ENCODE measurements at regions of chr4 and their contacts with region 1.

Region 1: GRCh38 chr4:78864405-78865024 is 74.7 kb downstream of the PAQR3 start:
- DNase-seq: no peak
- ATAC-seq: peak; percentile 47
- H3K4me3 Mint-ChIP-seq: peak overlapping the region; percentile 21
- H3K27ac Mint-ChIP-seq: peak overlapping the region; percentile 70
- H3K4me1 Mint-ChIP-seq: peaks cover 18% of the 10 kb centered on the region
- H3K27me3 Mint-ChIP-seq: no peaks in the 10 kb centered on the region
- CTCF ChIP-seq: peak; percentile 25

Region 2: GRCh38 chr4:78056265-78057129 is 808.0 kb before region 1 on chr4:
- CTCF ChIA-PET with region 1: no interaction called
- POLR2A ChIA-PET with region 1: no interaction called
- intact Hi-C with region 1: loop called (anchors 2 kb)
- DNase-seq: peak; percentile 29
- ATAC-seq: peak; percentile 74
- H3K4me3 Mint-ChIP-seq: peak overlapping the region; percentile 93
- H3K27ac Mint-ChIP-seq: no peak overlapping the region
- H3K4me1 Mint-ChIP-seq: peaks cover 32% of the 10 kb centered on the region
- H3K27me3 Mint-ChIP-seq: peaks cover 46% of the 10 kb centered on the region
- CTCF ChIP-seq: no peak

Region 3: GRCh38 chr4:78454501-78454900 is 410.0 kb before region 1 on chr4:
- CTCF ChIA-PET with region 1: no interaction called
- POLR2A ChIA-PET with region 1: no interaction called
- intact Hi-C with region 1: loop called (anchors 5 kb)
- DNase-seq: no peak
- ATAC-seq: no peak
- H3K4me3 Mint-ChIP-seq: no peak overlapping the region
- H3K27ac Mint-ChIP-seq: no peak overlapping the region
- H3K4me1 Mint-ChIP-seq: no peaks in the 10 kb centered on the region
- H3K27me3 Mint-ChIP-seq: peaks cover 11% of the 10 kb centered on the region
- CTCF ChIP-seq: no peak

Region 4: GRCh38 chr4:78644744-78645330 is 219.7 kb before region 1 on chr4:
- CTCF ChIA-PET with region 1: interaction called, 21 read pairs
- POLR2A ChIA-PET with region 1: interaction called, 4 read pairs
- intact Hi-C with region 1: loop called (anchors 1 kb)
- DNase-seq: no peak
- ATAC-seq: peak; percentile 98
- H3K4me3 Mint-ChIP-seq: peak overlapping the region; percentile 26
- H3K27ac Mint-ChIP-seq: peak overlapping the region; percentile 53
- H3K4me1 Mint-ChIP-seq: peaks cover 70% of the 10 kb centered on the region
- H3K27me3 Mint-ChIP-seq: no peaks in the 10 kb centered on the region
- CTCF ChIP-seq: peak; percentile 39

Region 5: DNA sequence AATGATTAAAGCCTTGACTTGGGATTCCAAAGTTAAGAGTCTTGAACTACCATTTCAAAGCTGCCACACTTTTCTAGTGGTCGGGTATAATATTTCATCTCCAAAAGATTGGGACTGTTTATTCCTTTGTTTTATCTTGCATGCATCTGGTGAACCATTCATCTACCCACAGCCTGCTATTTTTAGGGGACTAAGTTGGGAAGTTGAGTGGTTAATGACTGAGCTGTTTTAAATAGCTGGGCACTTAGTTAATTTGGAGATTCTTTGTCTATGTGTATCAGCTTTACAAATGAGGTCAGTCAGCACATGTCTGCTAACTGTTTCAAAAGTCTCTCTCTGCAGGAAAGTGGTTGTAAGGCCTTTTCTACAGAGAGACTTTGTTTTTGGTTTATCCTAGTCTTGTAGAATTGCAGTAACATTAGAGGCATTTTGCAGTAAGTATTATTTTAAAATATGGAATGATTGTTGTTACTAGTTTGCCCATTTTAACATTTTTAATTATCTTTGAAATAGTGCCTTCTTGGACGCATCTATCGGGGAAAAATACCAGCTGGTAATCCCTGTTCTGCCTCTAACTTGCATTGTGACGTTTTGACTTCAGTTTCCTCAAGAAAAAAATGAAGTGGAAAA is 80.2 kb before region 1 on chr4:
- CTCF ChIA-PET with region 1: no interaction called
- POLR2A ChIA-PET with region 1: no interaction called
- intact Hi-C with region 1: loop called (anchors 2 kb)
- DNase-seq: no peak
- ATAC-seq: no peak
- H3K4me3 Mint-ChIP-seq: no peak overlapping the region
- H3K27ac Mint-ChIP-seq: no peak overlapping the region
- H3K4me1 Mint-ChIP-seq: peaks cover 50% of the 10 kb centered on the region
- H3K27me3 Mint-ChIP-seq: no peaks in the 10 kb centered on the region
- CTCF ChIP-seq: no peak

Region 6: GRCh38 chr4:78845472-78845871 is 19.0 kb before region 1 on chr4:
- CTCF ChIA-PET with region 1: interaction called, 4 read pairs
- POLR2A ChIA-PET with region 1: no interaction called
- intact Hi-C with region 1: loop called (anchors 2 kb)
- DNase-seq: no peak
- ATAC-seq: peak; percentile 28
- H3K4me3 Mint-ChIP-seq: peak overlapping the region; percentile 38
- H3K27ac Mint-ChIP-seq: peak overlapping the region; percentile 50
- H3K4me1 Mint-ChIP-seq: peaks cover 40% of the 10 kb centered on the region
- H3K27me3 Mint-ChIP-seq: no peaks in the 10 kb centered on the region
- CTCF ChIP-seq: no peak

Region 7: DNA sequence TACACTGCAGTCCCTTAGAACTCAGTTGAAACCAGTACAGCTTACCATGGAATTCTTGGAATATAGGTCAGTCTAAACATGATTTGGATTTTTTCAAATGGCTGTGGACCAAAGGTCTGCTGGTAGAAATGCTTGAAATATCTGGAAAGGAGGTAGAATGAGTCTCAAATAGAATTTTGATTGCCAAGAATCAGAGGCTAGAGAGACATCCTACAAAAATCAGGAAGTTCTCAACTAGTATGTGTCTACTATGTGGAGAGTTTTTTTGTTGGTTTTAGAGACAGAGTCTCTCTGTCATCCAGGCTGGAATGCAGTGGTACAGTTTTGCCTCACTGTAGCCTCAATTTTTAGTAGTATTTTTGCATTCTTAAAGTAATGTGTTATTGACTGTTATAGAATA is 21.1 kb after region 1 on chr4:
- CTCF ChIA-PET with region 1: no interaction called
- POLR2A ChIA-PET with region 1: no interaction called
- intact Hi-C with region 1: no loop called
- DNase-seq: no peak
- ATAC-seq: no peak
- H3K4me3 Mint-ChIP-seq: no peak overlapping the region
- H3K27ac Mint-ChIP-seq: no peak overlapping the region
- H3K4me1 Mint-ChIP-seq: peaks cover 14% of the 10 kb centered on the region
- H3K27me3 Mint-ChIP-seq: no peaks in the 10 kb centered on the region
- CTCF ChIP-seq: no peak

Region 8: DNA sequence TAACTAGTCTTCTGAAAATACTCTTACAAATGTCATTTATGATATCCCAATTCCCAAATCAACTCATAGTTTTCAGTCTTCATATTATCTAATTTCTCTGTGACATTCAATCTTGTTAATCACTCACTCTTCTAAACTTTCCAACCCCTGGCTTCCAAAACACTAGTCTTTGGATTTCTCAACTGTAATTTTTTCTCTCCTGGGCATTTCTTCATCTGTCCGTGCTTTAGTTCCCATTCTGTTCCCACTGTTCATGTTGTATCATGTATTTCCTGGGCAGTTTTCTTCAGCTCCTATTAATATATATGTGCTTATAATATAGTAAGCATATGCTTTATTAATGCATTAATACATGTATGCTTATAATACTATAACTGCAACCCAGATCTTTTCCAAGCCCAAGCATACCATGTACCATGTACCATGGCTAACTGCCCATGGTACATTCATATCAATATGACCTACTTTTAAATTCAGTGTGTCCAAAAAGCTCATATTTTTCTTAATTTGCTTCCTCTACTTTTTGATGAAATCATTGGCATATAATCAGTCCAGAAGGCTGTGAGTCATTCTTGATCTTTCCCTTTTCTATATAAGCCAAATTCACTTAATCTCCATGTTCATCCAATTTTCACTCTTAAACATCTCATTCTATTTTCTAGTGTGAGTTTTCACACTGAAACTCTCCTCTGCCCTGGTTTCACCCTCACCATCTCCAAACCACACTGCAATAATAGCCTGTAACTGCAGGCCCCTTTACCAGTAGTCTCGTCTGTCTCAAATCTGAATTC is 564.8 kb after region 1 on chr4:
- CTCF ChIA-PET with region 1: no interaction called
- POLR2A ChIA-PET with region 1: no interaction called
- intact Hi-C with region 1: no loop called
- DNase-seq: no peak
- ATAC-seq: no peak
- H3K4me3 Mint-ChIP-seq: no peak overlapping the region
- H3K27ac Mint-ChIP-seq: no peak overlapping the region
- H3K4me1 Mint-ChIP-seq: no peaks in the 10 kb centered on the region
- H3K27me3 Mint-ChIP-seq: no peaks in the 10 kb centered on the region
- CTCF ChIP-seq: no peak